ENCODE measurements at regions of chr3 and their contacts with region 1.

Region 1: GRCh38 chr3:36729204-36730056 is 34.9 kb downstream of the DCLK3 start:
- DNase-seq: peak in 1 of 2 donors; percentile 62
- ATAC-seq: peak; percentile 49 to 78 (median 57)
- H3K4me3 ChIP-seq: no peak overlapping the region
- H3K4me3 Mint-ChIP-seq: no peak overlapping the region
- H3K27ac ChIP-seq: no peak overlapping the region
- H3K27ac Mint-ChIP-seq: no peak overlapping the region
- H3K4me1 ChIP-seq: no peaks in the 10 kb centered on the region
- H3K4me1 Mint-ChIP-seq: no peaks in the 10 kb centered on the region
- H3K27me3 ChIP-seq: no peaks in the 10 kb centered on the region
- H3K27me3 Mint-ChIP-seq: peaks cover 0 to 22% of the 10 kb centered on the region in 2 donors
- CTCF ChIP-seq: peak; percentile 58

Region 2: GRCh38 chr3:36796881-36797280 is 67.5 kb after region 1 on chr3:
- intact Hi-C with region 1: no loop called
- DNase-seq: no peak
- ATAC-seq: no peak
- H3K4me3 ChIP-seq: no peak overlapping the region
- H3K4me3 Mint-ChIP-seq: no peak overlapping the region
- H3K27ac ChIP-seq: no peak overlapping the region
- H3K27ac Mint-ChIP-seq: no peak overlapping the region
- H3K4me1 ChIP-seq: no peaks in the 10 kb centered on the region
- H3K4me1 Mint-ChIP-seq: no peaks in the 10 kb centered on the region
- H3K27me3 ChIP-seq: no peaks in the 10 kb centered on the region
- H3K27me3 Mint-ChIP-seq: peaks cover 17 to 28% of the 10 kb centered on the region in 2 donors
- CTCF ChIP-seq: no peak

Region 3: DNA sequence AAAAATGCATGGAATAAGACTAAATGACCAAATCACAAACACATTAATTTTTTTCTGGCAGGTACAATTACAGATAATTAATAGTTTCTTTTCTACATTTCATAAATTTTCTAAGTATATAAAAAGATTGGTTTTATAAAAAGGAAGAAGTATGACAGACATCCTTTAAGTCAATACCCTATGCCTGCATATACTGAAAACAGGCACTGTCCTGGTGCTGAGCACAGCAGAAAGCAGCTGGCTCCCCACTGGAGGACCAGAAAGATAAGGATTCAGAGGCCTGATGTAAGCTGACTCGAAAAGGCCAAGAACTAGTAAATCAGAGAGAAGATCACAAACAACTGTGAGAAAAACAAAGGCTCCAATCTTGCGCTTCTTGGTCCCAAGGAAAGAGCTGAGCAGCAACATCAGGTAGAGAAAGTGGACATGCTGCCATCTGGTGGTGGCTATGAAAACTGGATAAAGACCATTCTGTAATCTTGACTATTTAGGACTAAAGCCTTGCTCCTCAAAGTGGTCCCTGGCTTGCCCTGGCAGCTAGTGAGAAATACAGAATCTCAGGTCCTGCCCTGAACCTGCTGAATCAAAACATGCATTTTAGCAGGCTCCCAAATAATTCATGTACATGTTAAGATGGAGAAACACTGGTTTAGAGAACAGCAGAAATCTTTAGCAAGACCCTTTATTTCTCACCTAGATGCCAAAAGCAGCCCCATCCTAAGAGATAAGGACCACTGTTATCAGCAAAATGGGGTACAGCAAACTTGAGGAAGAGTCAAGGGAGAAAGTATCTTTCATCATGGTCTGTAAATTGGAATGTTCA is 139.4 kb after region 1 on chr3:
- intact Hi-C with region 1: loop called (anchors 1 kb)
- DNase-seq: peak in 1 of 2 donors; percentile 86
- ATAC-seq: peak; percentile 77 to 89 (median 83)
- H3K4me3 ChIP-seq: no peak overlapping the region
- H3K4me3 Mint-ChIP-seq: no peak overlapping the region
- H3K27ac ChIP-seq: no peak overlapping the region
- H3K27ac Mint-ChIP-seq: peak overlapping the region; percentile 9 to 71
- H3K4me1 ChIP-seq: peaks cover 8% of the 10 kb centered on the region
- H3K4me1 Mint-ChIP-seq: peaks cover 42 to 43% of the 10 kb centered on the region in 2 donors
- H3K27me3 ChIP-seq: no peaks in the 10 kb centered on the region
- H3K27me3 Mint-ChIP-seq: no peaks in the 10 kb centered on the region
- CTCF ChIP-seq: peak; percentile 88

Region 4: GRCh38 chr3:36969540-36970432 is 240.4 kb after region 1 on chr3:
- intact Hi-C with region 1: no loop called
- DNase-seq: peak in 1 of 2 donors; percentile 60
- ATAC-seq: peak; percentile 84 to 95 (median 92)
- H3K4me3 ChIP-seq: no peak overlapping the region
- H3K4me3 Mint-ChIP-seq: no peak overlapping the region
- H3K27ac ChIP-seq: peak overlapping the region; percentile 57
- H3K27ac Mint-ChIP-seq: peak overlapping the region in 1 of 2 donors; percentile 82
- H3K4me1 ChIP-seq: peaks cover 3% of the 10 kb centered on the region
- H3K4me1 Mint-ChIP-seq: peaks cover 7 to 16% of the 10 kb centered on the region in 2 donors
- H3K27me3 ChIP-seq: no peaks in the 10 kb centered on the region
- H3K27me3 Mint-ChIP-seq: no peaks in the 10 kb centered on the region
- CTCF ChIP-seq: no peak

Region 5: DNA sequence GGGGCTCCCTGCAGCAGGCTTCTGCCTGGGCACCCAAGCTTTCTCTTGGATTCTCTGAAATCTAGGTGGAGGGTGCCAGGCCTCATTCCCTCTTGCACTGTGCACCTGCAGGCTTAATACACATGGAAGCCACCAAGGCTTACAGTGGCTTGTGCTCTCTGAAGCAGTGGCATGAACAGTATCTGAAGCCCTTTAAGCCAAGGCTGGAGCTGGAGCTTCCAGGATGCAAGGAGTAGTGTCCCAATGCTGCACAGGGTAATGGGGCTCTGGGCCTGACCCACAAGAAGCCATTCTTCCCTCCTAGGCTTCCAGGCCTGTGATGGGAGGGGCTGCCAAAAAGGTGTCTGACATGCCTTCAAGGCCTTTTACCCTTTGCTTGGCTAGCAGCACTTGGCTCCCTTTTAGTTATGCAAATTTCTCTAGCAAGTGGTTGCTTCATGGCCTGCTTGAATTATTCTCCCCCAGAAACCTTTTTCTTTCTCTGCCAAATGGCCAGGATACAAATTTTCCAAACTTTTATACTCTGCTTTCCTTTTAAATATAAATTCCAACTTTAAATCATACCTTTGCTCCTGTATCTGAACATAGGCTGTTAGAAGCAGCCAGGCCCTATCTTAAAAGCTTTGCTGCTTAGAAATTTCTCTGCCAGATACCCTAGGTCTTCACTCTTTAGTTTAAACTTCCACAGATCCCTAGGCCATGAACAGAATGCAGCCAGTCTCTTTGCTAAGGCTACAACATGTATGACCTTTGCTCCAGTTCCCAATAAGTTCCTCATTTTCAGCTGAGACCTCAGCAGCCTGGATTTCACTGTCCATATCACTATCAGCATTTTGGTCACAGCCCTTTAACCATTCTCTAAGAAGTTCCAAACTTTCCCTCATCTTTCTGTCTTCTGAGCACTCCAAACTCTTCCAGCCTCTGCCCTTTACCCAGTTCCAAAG is 646.0 kb after region 1 on chr3:
- intact Hi-C with region 1: no loop called
- DNase-seq: no peak
- ATAC-seq: no peak
- H3K4me3 ChIP-seq: no peak overlapping the region
- H3K4me3 Mint-ChIP-seq: no peak overlapping the region
- H3K27ac ChIP-seq: no peak overlapping the region
- H3K27ac Mint-ChIP-seq: peak overlapping the region; percentile 4 to 66
- H3K4me1 ChIP-seq: no peaks in the 10 kb centered on the region
- H3K4me1 Mint-ChIP-seq: peaks cover 14 to 21% of the 10 kb centered on the region in 2 donors
- H3K27me3 ChIP-seq: no peaks in the 10 kb centered on the region
- H3K27me3 Mint-ChIP-seq: no peaks in the 10 kb centered on the region
- CTCF ChIP-seq: no peak

Measured in natural killer cell (primary cell).